Sciatic nerve (tissue), 2 donors: ENCODE measurements at regions of chr11 and their contacts with region 1.

Region 1: DNA sequence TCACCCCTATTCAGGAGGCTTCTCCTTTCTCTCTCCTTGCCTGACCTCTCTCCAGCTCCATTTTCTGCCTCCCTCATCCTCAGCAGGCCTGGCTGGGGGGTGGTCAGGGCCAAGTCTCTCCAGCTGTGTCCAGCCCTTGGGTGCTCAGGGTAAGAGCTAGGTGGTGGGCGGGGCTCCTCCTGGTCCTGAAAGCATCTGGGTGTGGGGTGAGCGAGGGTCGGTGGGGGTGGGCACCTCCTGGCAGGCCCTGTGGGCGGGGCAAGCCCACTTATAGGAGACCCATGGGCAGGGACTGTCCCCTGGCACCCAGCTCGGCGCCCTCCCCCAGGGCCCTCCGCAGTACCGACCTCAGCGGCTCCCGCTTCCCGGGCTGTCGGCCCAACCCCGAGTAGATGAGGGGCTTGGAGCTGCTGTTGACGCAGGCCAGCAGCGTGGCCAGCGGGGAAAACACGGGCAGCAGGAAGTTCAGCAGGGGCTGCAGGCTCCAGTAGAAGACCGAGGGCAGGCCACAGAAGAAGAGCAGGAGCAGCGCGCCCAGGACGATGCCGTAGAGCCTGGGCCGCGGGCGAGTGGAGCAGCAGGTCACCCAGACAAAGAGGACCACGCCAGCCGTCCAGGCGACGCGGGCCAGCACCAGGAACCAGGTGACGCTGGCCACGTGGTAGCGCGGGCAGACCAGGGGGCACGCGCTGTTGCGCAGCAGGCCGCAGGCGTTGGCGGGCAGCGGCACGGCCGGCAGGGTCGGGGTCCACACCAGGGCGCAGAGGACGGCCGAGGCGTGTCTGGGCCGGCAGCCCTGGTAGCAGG is 734 bp downstream of the MRGPRG start:
- DNase-seq: peak; percentile 62
- ATAC-seq: peak; percentile 3

Region 2: DNA sequence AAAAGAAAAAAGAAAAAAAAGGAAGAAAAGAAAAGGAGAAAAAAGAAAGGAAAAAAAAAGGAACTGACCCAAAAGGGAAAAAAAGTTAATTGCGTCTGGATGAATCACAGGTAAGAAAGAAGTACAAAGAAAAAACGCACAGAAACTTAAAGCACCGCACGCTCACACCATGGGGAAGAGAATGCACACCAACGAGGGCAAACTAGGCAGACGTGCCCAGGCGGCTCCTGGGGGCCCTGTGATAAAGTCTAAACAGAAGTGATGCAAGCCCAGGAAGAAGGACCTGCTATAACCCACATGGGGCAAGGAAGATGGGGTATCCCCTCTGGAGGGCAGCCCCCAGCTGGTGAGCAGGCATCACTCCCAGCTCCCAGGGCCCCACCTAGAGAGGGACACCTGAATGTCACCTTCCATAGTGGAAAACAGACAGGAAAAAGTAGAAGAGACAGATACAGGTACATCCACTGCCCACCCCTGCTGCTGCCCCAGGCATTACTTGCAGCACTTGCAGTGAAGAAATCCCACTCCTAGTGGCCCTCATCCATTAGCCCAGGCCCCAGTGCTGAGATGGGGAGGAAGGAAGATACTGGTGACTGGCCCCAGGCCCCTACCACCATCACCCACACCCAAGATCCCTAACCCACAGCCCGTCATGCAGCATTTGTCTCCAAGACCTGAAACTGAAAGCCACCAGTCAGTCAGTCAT is 254.6 kb before region 1 on chr11:
- intact Hi-C with region 1: loop called (anchors 10 kb)
- DNase-seq: no peak
- ATAC-seq: no peak

Region 3: GRCh38 chr11:3037040-3037944 is 180.6 kb before region 1 on chr11:
- intact Hi-C with region 1: loop called (anchors 2 kb)
- DNase-seq: peak; percentile 92
- ATAC-seq: peak; percentile 89

Region 4: DNA sequence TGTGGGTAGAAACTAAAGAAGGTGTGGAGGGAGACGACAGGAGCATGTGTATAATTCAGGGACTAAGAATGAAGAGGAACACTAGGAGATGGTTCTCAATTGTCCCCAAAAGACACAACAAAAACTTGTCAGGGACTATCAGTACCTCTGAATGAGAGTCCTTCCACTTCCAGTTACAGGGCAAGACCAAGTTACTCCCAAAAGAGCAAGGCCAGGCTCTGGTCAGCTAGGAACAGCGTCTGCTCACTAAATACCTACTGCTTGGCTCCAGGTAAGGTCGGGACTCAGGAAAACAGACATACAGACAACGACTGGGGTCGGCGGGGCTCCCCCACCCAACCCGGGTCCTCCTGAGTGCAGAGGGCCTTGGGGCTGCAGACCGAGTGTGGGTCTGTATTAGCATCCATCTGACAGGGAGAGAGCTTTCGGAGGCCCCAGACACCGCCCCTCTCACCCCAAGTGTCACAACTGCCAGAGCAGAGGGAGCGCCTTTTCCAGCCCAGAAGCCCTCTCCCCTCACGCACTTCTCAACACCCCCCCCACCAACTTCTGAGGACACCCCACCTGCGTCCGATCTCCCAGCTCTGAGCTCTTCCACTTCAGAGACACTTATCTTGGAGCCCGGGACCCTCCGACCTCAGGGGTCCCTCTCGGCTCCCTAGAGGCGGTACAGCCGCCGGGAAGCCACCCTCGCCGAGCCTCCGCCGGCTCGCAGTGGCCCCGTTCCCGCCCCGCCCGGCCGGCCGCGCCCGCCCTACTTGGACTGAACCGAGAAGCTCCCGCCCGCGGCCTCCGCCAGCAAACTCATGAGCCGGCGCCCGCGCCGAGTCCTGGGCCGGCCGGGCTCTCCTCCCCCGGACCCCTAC is 622.4 kb after region 1 on chr11:
- intact Hi-C with region 1: no loop called
- DNase-seq: no peak
- ATAC-seq: no peak